Activated B cell treated with CpG ODN at 0.5 μM for 24 hours (primary cell): ENCODE measurements at regions of chr12 and their contacts with region 1.

Region 1: DNA sequence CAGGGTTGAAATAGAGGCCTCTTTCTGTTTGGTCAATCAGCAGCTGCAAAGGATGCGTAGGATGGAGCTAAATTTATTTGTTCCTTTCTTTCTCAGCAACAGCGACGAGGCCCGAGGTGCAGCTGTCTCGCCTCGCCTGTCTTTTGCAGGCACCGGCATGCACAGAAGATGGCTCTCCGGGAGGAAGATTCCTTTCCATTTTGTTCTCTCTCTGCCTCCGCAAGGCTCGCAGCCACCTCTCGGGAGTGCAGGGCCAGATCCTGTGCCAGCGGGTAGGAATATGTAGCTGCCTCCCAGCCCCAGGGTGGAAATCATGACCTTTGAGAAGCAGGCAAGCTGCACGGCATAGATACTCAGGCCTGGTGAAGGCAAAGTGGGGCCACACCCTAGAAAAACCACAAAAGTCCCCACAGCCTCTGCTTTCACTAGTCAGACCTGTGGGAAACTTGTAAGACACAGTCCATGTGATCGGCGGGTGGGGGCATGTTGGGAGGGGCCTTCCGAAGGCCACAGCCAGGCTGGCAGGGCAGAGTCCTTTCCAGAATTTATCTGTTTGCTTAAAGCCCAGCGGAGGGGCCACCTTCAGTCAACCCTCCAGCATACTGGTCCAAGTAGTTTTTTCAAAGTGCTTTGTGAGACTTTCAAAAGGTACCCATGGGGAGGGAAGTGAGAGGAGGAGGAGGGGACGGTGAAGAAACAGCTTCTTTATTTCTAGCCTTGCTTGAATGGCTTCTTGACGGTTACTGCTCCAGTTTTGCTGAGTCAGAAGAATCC is at the start of gene MAP1LC3B2:
- DNase-seq: peak; percentile 77
- ATAC-seq: peak; percentile 83
- H3K4me3 Mint-ChIP-seq: peak within 1 kb of the TSS; percentile 84
- H3K27ac Mint-ChIP-seq: peak within 1 kb of the TSS; percentile 100
- H3K4me1 Mint-ChIP-seq: peaks cover 62% of the 10 kb centered on the region
- H3K27me3 Mint-ChIP-seq: no peaks in the 10 kb centered on the region
- CTCF ChIP-seq: no peak
- total RNA-seq, gene MAP1LC3B2: 1.0 and 1.9 TPM in 2 replicates

Region 2: DNA sequence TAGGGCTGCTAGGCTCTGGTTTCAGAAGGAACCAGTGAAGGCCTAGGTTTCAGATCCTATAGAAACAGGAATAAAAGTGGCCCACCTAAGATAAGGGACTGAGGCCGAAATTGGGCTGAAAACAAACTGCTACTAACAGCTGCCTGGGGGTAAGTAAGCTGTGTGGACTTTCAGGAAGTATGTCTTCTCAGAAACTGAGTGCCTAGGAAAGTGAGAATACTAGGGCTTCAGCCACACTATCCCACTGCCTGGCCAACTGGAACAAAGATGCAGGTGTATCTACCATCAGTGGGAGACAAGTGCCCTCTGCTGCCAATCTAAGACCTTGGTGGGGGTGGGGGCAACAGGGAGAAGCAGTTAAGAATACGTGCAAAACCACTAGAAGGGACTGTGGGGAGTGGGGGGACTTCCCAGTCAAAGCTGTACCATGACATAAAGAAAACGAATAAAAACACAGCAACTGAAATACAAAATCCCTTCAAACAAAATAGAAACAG is 364.4 kb before region 1 on chr12:
- CTCF ChIA-PET with region 1: no interaction called
- POLR2A ChIA-PET with region 1: interaction called, 11 read pairs
- intact Hi-C with region 1: loop called (anchors 1 kb)
- DNase-seq: peak; percentile 39
- ATAC-seq: peak; percentile 89
- H3K4me3 Mint-ChIP-seq: peak overlapping the region; percentile 71
- H3K27ac Mint-ChIP-seq: peak overlapping the region; percentile 89
- H3K4me1 Mint-ChIP-seq: peaks cover 82% of the 10 kb centered on the region
- H3K27me3 Mint-ChIP-seq: no peaks in the 10 kb centered on the region
- CTCF ChIP-seq: no peak

Region 3: DNA sequence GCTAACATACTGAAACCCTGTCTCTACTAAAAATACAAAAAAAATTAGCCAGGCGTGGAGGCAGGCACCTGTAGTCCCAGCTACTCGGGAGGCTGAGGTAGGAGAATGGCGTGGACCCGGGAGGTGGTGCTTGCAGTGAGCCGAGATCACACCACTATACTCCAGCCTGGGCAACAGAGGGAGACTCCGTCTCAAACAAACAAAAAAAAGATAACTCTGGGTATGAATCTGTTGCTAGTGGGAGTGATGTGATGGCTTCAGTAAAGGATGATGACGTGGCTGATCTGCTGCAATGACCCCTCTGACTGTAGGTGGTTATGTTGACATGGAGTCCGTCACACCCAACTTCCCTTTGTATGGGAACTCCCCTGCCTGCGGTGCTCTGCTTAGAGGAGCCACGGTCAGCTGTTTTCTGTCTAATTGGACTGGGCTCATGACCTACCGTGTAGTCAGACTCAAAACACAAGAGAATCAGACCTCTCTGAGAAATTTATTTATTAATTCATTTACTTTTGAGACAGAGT is 222.7 kb before region 1 on chr12:
- CTCF ChIA-PET with region 1: interaction called, 9 read pairs
- POLR2A ChIA-PET with region 1: interaction called, 69 read pairs
- intact Hi-C with region 1: loop called (anchors 1 kb)
- DNase-seq: peak; percentile 51
- ATAC-seq: peak; percentile 88
- H3K4me3 Mint-ChIP-seq: peak overlapping the region; percentile 73
- H3K27ac Mint-ChIP-seq: peak overlapping the region; percentile 97
- H3K4me1 Mint-ChIP-seq: peaks cover 79% of the 10 kb centered on the region
- H3K27me3 Mint-ChIP-seq: no peaks in the 10 kb centered on the region
- CTCF ChIP-seq: no peak

Region 4: DNA sequence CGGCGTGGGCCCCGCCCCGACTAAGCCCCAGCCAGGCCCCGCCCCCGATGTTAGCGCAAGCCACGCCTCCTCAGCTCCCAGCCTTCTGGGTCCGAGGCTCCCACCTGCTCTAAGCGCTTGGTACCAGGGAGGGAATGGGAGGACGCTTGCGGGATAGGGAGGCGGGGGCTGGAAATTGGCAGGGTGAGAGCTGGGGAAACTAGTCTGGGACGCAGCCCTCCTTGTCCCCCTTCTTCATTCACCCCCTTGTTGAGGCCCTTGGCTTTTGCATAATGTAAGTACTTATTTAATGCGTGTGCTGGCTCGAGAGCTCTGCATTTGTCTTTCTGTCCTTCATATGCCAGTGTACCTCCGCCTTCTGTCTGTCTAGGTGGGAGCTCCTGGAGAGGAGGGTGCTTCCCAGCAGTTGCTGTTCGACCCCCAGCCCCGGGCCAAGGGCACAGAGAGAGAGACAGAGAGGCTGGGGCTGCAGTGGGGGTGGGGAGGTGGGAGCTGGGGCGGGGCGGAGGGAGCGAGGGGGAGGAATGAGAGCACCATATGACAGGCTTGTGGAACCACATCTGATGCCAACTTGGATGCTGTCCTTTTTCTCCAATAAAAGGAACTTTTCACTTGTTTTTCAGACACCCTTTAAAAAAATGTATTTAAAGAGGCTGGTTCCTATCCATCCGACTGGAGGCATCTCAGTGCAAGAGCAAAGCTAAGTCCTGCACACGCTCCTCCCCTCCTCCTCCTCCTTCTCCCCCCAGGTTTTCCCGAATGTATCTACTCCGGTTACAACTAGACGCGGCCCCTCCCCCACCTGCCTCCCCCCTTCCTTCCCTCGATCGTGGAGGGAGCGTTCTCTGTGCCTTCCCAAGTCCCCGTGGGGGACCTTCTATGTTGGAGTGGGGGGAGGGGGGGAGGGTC is 25.8 kb before region 1 on chr12:
- CTCF ChIA-PET with region 1: interaction called, 5 read pairs
- POLR2A ChIA-PET with region 1: interaction called, 124 read pairs
- intact Hi-C with region 1: loop called (anchors 1 kb)
- DNase-seq: peak; percentile 82
- ATAC-seq: peak; percentile 88
- H3K4me3 Mint-ChIP-seq: peak overlapping the region; percentile 96
- H3K27ac Mint-ChIP-seq: peak overlapping the region; percentile 68
- H3K4me1 Mint-ChIP-seq: peaks cover 53% of the 10 kb centered on the region
- H3K27me3 Mint-ChIP-seq: no peaks in the 10 kb centered on the region
- CTCF ChIP-seq: no peak

Region 5: DNA sequence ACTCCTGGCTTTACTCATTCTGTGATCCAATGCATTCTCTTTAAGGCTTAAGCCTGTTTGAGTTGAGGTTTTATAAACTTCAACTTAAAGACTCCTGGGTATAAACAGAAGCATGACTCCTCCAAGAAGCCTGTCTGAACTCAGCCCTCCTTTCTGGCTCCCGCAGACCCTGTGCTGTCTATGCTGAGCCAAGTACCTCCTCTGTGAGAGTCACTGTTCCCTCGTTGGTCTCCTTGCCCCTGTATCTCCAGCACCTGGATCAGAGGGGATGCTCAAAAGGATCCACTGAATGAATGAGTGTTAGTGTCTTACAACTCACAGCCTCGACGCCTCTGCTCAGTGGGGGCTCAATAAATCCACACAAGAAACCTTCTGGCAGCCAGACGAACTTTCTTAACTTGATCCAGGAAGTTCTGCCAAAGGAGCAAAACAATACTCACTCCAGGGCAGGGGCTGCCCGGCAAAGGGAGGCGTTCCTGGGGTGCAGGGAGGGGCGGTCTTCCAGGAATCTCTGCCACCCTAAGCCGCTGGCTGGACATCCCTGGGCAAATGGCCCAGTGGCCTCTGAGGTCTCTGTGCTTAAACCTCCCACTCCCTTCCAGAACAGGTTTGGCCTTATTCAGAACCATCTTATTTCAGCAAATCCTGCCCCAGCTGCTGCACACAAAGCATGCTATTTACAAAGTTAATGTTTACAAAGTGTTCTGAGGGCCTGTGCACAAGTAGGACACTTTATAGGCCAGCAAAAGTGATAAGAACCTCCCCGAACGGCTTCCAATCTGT is 32.7 kb after region 1 on chr12:
- CTCF ChIA-PET with region 1: interaction called, 3 read pairs
- POLR2A ChIA-PET with region 1: interaction called, 6 read pairs
- intact Hi-C with region 1: loop called (anchors 1 kb)
- DNase-seq: no peak
- ATAC-seq: no peak
- H3K4me3 Mint-ChIP-seq: no peak overlapping the region
- H3K27ac Mint-ChIP-seq: peak overlapping the region; percentile 64
- H3K4me1 Mint-ChIP-seq: peaks cover 44% of the 10 kb centered on the region
- H3K27me3 Mint-ChIP-seq: no peaks in the 10 kb centered on the region
- CTCF ChIP-seq: no peak

Region 6: DNA sequence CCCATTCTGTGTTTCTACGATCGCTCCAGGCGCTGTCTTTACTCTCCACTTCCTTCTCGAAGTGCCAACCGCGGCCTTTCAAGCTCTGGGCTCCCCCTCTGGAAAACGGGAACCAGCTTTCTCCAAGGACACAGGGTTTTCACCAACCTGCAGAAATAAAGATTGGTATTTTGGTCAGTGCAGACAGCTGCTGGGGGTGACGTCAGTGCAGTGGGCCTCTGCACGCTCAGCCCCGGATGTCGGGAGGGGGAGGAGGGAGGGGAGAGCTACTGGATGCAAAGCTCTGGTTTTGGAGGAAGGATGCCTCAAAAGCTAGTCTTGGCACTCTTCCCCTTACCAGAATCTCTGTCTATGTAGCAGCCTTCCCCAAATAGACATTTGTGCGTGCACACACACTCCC is 302.0 kb after region 1 on chr12:
- CTCF ChIA-PET with region 1: no interaction called
- POLR2A ChIA-PET with region 1: no interaction called
- intact Hi-C with region 1: loop called (anchors 1 kb)
- DNase-seq: peak; percentile 44
- ATAC-seq: peak; percentile 72
- H3K4me3 Mint-ChIP-seq: peak overlapping the region; percentile 47
- H3K27ac Mint-ChIP-seq: peak overlapping the region; percentile 81
- H3K4me1 Mint-ChIP-seq: peaks cover 74% of the 10 kb centered on the region
- H3K27me3 Mint-ChIP-seq: no peaks in the 10 kb centered on the region
- CTCF ChIP-seq: no peak